PC-9 (cell line): ENCODE measurements at regions of chr1 and their contacts with region 1.

Region 1: GRCh38 chr1:203273206-203273868 is 32.0 kb upstream of the BTG2 start:
- DNase-seq: peak; percentile 72 to 86
- H3K4me3 ChIP-seq: no peak overlapping the region
- H3K27ac ChIP-seq: no peak overlapping the region
- H3K4me1 ChIP-seq: no peaks in the 10 kb centered on the region
- H3K27me3 ChIP-seq: no peaks in the 10 kb centered on the region
- CTCF ChIP-seq: peak; percentile 95

Region 2: GRCh38 chr1:203486618-203487370 is 213.5 kb after region 1 on chr1:
- CTCF ChIA-PET with region 1: no interaction called
- POLR2A ChIA-PET with region 1: no interaction called
- intact Hi-C with region 1: loop called (anchors 1 kb)
- DNase-seq: no peak
- H3K4me3 ChIP-seq: peak overlapping the region; percentile 56; the same call in 1 of the 2 replicates
- H3K27ac ChIP-seq: no peak overlapping the region
- H3K4me1 ChIP-seq: peaks cover 4% of the 10 kb centered on the region
- H3K27me3 ChIP-seq: no peaks in the 10 kb centered on the region
- CTCF ChIP-seq: no peak

Region 3: GRCh38 chr1:203504397-203505250 is 231.3 kb after region 1 on chr1:
- CTCF ChIA-PET with region 1: no interaction called
- POLR2A ChIA-PET with region 1: no interaction called
- intact Hi-C with region 1: loop called (anchors 5 kb)
- DNase-seq: peak; percentile 65 to 78
- H3K4me3 ChIP-seq: no peak overlapping the region
- H3K27ac ChIP-seq: no peak overlapping the region
- H3K4me1 ChIP-seq: peaks cover 15% of the 10 kb centered on the region
- H3K27me3 ChIP-seq: no peaks in the 10 kb centered on the region
- CTCF ChIP-seq: peak; percentile 95

Region 4: DNA sequence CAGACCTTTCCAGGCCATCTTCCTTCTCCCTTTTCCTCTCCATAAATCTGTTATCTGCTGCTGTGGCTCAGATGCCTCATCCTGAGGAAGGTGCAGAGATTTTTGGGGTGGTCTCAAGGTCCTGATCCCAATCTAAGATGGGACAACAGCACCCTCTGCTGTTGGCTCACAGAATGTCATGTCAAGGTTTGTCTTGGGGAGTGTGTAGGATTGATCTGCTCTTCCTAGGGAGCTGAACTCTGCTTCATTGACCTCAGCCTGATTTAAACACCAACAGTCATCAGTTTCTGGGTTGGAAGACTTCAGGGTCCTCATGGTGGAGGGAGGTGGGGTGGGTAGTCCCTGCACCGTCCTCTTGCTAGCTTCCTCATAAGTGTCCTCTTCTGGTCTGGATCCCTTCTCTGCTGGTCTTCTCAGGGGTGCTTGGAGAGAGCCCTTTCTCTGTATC is 428.8 kb after region 1 on chr1:
- CTCF ChIA-PET with region 1: no interaction called
- POLR2A ChIA-PET with region 1: no interaction called
- intact Hi-C with region 1: loop called (anchors 5 kb)
- DNase-seq: peak; percentile 39 to 49
- H3K4me3 ChIP-seq: no peak overlapping the region
- H3K27ac ChIP-seq: no peak overlapping the region
- H3K4me1 ChIP-seq: no peaks in the 10 kb centered on the region
- H3K27me3 ChIP-seq: no peaks in the 10 kb centered on the region
- CTCF ChIP-seq: peak; percentile 99